Activated B cell treated with CpG ODN at 0.5 μM for 24 hours (primary cell): ENCODE measurements at regions of chr3 and their contacts with region 1.

Region 1: GRCh38 chr3:58177747-58178527 is 32.8 kb downstream of the DNASE1L3 start:
- DNase-seq: peak; percentile 91
- ATAC-seq: peak; percentile 96
- H3K4me3 Mint-ChIP-seq: peak overlapping the region; percentile 81
- H3K27ac Mint-ChIP-seq: no peak overlapping the region
- H3K4me1 Mint-ChIP-seq: peaks cover 24% of the 10 kb centered on the region
- H3K27me3 Mint-ChIP-seq: no peaks in the 10 kb centered on the region
- CTCF ChIP-seq: peak; percentile 27

Region 2: GRCh38 chr3:57864853-57865252 is 313.1 kb before region 1 on chr3:
- CTCF ChIA-PET with region 1: no interaction called
- POLR2A ChIA-PET with region 1: no interaction called
- intact Hi-C with region 1: loop called (anchors 10 kb)
- DNase-seq: no peak
- ATAC-seq: no peak
- H3K4me3 Mint-ChIP-seq: no peak overlapping the region
- H3K27ac Mint-ChIP-seq: no peak overlapping the region
- H3K4me1 Mint-ChIP-seq: no peaks in the 10 kb centered on the region
- H3K27me3 Mint-ChIP-seq: no peaks in the 10 kb centered on the region
- CTCF ChIP-seq: no peak

Region 3: GRCh38 chr3:58154626-58155449 is 23.1 kb before region 1 on chr3:
- CTCF ChIA-PET with region 1: no interaction called
- POLR2A ChIA-PET with region 1: no interaction called
- intact Hi-C with region 1: no loop called
- DNase-seq: no peak
- ATAC-seq: no peak
- H3K4me3 Mint-ChIP-seq: no peak overlapping the region
- H3K27ac Mint-ChIP-seq: no peak overlapping the region
- H3K4me1 Mint-ChIP-seq: no peaks in the 10 kb centered on the region
- H3K27me3 Mint-ChIP-seq: no peaks in the 10 kb centered on the region
- CTCF ChIP-seq: no peak

Region 4: GRCh38 chr3:58167431-58168351 is 10.2 kb before region 1 on chr3:
- CTCF ChIA-PET with region 1: interaction called, 23 read pairs
- POLR2A ChIA-PET with region 1: no interaction called
- intact Hi-C with region 1: no loop called
- DNase-seq: peak; percentile 31
- ATAC-seq: peak; percentile 83
- H3K4me3 Mint-ChIP-seq: no peak overlapping the region
- H3K27ac Mint-ChIP-seq: no peak overlapping the region
- H3K4me1 Mint-ChIP-seq: no peaks in the 10 kb centered on the region
- H3K27me3 Mint-ChIP-seq: no peaks in the 10 kb centered on the region
- CTCF ChIP-seq: no peak

Region 5: DNA sequence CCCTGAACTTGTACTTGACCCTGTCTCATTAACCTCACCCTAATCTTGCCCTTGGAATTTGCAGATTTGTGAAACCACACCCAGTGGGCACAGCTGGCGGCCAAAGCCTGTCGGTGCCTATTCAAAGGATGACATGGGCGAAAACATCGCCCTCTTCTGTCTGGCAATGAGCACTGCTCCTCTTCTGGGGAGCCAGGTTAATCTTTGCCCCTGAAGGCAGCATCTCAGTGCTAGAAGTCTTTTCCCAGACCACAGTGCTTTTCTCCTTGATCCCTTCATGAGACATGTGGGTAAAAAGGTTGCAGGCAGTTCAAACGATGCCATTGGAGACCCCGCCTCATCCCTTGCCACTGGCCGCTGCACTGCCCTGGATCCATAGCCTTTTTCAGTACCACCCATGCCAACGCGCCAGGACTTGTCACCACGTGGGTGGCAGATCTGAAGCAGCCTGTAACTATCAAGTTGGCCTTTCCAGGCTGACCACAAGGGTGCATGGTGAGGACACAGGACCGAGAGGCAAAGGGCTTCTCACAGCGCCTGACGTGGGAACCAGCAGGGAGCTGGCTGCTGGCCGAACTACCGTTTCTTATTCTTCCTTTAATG is 39.4 kb after region 1 on chr3:
- CTCF ChIA-PET with region 1: interaction called, 6 read pairs
- POLR2A ChIA-PET with region 1: interaction called, 17 read pairs
- intact Hi-C with region 1: no loop called
- DNase-seq: peak; percentile 42
- ATAC-seq: peak; percentile 58
- H3K4me3 Mint-ChIP-seq: peak overlapping the region; percentile 74
- H3K27ac Mint-ChIP-seq: peak overlapping the region; percentile 79
- H3K4me1 Mint-ChIP-seq: peaks cover 58% of the 10 kb centered on the region
- H3K27me3 Mint-ChIP-seq: no peaks in the 10 kb centered on the region
- CTCF ChIP-seq: peak; percentile 62

Region 6: GRCh38 chr3:58288011-58288728 is 110.2 kb after region 1 on chr3:
- CTCF ChIA-PET with region 1: no interaction called
- POLR2A ChIA-PET with region 1: no interaction called
- intact Hi-C with region 1: no loop called
- DNase-seq: no peak
- ATAC-seq: no peak
- H3K4me3 Mint-ChIP-seq: no peak overlapping the region
- H3K27ac Mint-ChIP-seq: no peak overlapping the region
- H3K4me1 Mint-ChIP-seq: no peaks in the 10 kb centered on the region
- H3K27me3 Mint-ChIP-seq: no peaks in the 10 kb centered on the region
- CTCF ChIP-seq: no peak

Region 7: GRCh38 chr3:58414538-58415197 is 236.7 kb after region 1 on chr3:
- CTCF ChIA-PET with region 1: interaction called, 3 read pairs
- POLR2A ChIA-PET with region 1: no interaction called
- intact Hi-C with region 1: loop called (anchors 1 kb)
- DNase-seq: no peak
- ATAC-seq: peak; percentile 81
- H3K4me3 Mint-ChIP-seq: no peak overlapping the region
- H3K27ac Mint-ChIP-seq: no peak overlapping the region
- H3K4me1 Mint-ChIP-seq: peaks cover 48% of the 10 kb centered on the region
- H3K27me3 Mint-ChIP-seq: no peaks in the 10 kb centered on the region
- CTCF ChIP-seq: peak; percentile 55